GM12878 (cell line): ENCODE measurements at regions of chr17 and their contacts with region 1.

Region 1: GRCh38 chr17:55466671-55467070 is 44.6 kb downstream of the SMIM36 start:
- DNase-seq: peak; percentile 55
- ATAC-seq: peak; percentile 51
- H3K4me3 ChIP-seq: no peak overlapping the region
- H3K27ac ChIP-seq: no peak overlapping the region
- H3K4me1 ChIP-seq: peaks cover 18% of the 10 kb centered on the region
- H3K27me3 ChIP-seq: no peaks in the 10 kb centered on the region
- CTCF ChIP-seq: no peak
- EP300 ChIP-seq: no peak
- POLR2A ChIP-seq: no peak
- RAD21 ChIP-seq: no peak

Region 2: DNA sequence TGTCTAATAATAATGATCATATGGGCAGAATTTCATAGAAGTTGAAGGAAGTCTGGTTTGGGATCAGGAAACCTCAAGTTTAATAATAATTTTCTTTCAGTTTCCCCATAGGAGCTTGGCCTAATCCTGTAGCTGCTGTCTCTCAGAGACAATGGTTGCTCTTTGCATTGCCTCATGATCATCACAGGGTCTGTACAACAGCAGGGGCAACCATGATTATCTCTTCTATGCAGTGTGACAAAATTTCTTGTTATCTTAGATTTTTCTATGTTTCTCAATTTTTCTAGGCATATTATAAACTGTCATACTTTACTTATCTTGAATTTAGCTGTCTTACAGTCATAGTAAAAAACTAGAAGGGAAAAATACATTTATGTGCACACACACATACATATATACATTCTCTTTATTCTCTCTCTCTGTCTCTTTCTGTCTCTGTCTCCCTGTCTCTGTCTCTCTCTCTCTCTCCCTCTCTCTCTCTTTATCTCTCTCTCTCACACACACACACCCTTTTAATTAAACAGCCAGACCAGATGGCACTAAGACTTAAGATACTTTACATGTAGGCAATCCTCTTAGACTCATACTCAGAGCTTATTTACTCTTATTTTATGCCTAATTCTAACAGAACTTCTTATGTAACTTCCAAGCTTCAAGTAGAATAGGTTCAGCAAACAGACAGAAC is 14.1 kb after region 1 on chr17:
- CTCF ChIA-PET with region 1: interaction called, 4 read pairs
- POLR2A ChIA-PET with region 1: interaction called, 4 read pairs
- RAD21 ChIA-PET with region 1: interaction called, 6 read pairs
- SMC1A ChIA-PET with region 1: interaction called, 10 read pairs
- in situ Hi-C with region 1: no loop called
- intact Hi-C with region 1: no loop called
- DNase-seq: no peak
- ATAC-seq: no peak
- H3K4me3 ChIP-seq: no peak overlapping the region
- H3K27ac ChIP-seq: no peak overlapping the region
- H3K4me1 ChIP-seq: no peaks in the 10 kb centered on the region; the same call in 1 of the 2 replicates
- H3K27me3 ChIP-seq: no peaks in the 10 kb centered on the region
- CTCF ChIP-seq: no peak
- EP300 ChIP-seq: no peak
- POLR2A ChIP-seq: no peak
- RAD21 ChIP-seq: no peak

Region 3: DNA sequence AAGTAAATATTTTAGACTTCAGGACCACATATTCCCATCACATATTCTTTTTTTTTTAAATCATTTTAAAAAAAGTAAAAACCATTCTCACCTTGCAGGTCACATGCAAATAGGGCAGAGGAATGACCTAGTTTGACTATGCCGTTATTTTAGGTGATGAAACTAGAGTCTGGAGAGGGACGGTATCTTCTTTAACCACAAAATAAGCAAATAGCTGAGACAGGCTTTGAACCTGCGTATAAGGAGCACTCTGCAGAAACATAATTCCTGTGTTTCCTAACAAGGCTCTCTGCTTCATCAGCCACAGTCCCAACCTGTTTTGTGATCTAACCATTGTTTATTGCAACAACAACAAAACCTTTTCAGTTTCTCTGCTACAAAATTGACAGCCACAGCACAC is 405.7 kb after region 1 on chr17:
- CTCF ChIA-PET with region 1: no interaction called
- POLR2A ChIA-PET with region 1: no interaction called
- RAD21 ChIA-PET with region 1: no interaction called
- SMC1A ChIA-PET with region 1: no interaction called
- in situ Hi-C with region 1: no loop called
- intact Hi-C with region 1: no loop called
- DNase-seq: no peak
- ATAC-seq: no peak
- H3K4me3 ChIP-seq: no peak overlapping the region
- H3K27ac ChIP-seq: no peak overlapping the region
- H3K4me1 ChIP-seq: no peaks in the 10 kb centered on the region
- H3K27me3 ChIP-seq: no peaks in the 10 kb centered on the region
- CTCF ChIP-seq: no peak
- EP300 ChIP-seq: no peak
- POLR2A ChIP-seq: no peak
- RAD21 ChIP-seq: no peak